Posterior vena cava (tissue), 2 donors: ENCODE measurements at regions of chr11 and their contacts with region 1.

Region 1: DNA sequence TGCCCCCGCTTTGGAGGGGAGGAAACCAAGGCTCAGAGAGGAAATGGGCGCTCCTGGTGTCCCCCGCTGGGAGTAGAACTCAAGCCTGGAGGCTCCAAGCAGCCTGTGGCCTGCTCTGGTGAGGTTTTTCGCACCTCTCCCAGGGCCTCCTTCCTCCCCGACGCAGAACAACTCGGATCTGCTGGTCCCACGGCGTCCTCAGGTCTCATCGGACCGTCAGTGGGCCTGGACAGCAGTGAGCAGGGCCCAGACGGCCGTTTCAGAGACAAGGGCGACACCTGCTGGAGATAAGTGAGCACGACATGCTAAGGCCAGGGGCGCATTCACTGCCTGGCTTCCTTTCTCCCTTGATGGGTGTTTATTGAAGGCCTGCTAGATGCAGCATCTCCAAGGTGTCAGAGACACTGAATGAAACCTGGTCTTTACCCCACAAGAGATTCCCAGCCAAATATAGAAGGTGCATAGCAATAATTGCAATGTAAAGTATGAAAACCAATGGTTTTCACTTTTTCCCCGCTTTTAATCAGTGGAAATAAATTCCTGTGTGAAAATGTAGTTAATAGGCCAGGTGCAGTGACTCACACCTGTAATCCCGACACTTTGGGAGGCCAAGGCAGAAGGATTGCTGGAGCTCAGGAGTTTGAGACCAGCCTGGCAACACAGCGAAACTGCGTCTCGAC is 26.9 kb upstream of the CD82 start:
- DNase-seq: peak; percentile 93

Region 2: DNA sequence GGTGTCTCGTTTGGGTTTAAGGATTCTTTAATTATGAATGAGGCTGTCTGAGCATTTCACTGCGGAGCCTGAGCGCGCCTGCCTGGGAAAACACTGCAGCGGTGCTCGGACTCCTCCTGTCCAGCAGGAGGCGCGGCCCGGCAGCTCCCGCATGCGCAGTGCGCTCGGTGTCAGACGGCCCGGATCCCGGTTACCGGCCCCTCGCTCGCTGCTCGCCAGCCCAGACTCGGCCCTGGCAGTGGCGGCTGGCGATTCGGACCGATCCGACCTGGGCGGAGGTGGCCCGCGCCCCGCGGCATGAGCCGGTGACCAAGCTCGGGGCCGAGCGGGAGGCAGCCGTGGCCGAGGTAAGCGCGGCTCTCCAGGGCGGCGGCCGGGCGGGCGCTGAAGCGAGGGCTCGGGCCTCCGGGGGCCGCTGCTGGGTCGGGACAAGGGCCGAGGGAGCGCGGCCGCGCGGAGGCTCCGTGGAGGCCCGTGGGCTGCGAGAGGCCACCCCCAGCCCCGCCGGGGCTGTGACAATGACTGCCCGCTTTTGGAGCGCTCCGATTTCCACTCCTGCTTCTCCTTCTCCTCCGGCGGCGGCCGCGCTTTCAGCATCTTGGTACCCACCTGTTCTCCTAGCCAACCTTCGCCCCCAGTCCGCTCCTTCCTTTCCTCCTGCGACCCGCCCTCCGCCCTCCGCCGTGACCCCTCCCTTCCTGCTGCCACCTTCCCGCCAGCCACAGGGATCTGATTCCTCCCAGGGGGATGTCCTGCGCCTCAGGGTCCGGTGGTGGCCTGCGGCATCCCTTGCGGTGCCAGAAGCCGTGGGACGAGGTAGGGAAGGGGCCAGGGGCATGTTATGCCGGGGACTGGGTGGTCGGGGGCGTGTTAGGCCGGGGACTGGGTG is 442.8 kb before region 1 on chr11 and contains the start of gene EXT2:
- intact Hi-C with region 1: loop called in 1 of 2 experiments (anchors 10 kb)
- DNase-seq: peak; percentile 96
- total RNA-seq, gene EXT2: 60.1 to 62.8 TPM

Region 3: DNA sequence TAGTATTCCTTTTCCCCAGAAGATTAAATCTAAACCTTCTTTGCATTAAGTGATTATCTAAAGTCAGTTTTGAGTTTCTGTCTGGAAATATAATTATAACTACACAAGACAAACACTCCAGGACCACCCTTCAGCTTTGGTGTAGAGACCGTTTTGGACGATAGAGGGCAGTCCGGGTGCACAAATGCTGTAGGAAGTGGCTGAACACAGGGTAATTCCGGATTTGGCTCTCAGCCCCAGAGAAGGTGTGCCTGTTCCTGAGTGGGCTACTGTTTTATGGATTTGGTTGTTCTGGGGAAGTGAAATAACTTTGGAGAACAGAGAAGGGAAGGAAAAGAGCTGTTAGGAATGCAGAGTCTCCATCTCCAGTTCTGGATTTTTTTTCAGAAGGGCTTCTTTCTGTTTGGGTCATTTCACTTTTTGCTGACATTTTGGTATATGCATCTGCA is 428.3 kb before region 1 on chr11:
- intact Hi-C with region 1: loop called in 1 of 2 experiments (anchors 10 kb)
- DNase-seq: no peak

Region 4: DNA sequence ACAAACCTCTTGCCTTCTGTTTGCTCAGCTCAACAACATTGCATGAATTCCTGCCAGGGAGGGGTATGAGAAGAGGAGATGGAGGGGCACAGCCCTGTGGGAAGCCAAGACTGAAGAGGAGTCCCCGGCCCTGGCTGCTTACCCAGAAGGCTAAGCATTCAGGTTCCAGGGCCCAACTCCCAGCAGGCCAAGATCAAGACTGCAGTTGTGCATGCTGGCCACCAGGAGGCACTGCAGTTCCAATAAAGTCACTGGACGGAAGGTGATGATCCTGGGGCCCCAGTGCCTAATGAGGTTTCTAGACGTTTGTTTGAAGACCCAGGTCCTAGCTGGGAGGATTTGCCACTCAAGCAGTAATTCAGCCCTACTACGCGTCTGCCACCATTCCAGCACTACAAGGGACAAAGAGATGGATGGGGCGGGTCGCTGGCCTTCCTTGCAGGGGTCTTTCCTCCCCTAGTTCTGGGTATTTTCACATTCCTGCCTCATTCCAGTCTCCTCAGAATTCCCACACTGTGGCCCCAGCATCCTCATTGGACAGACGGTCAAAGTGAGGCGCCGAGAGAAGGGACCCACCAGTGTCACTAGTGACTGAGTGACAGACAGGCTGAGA is 252.1 kb before region 1 on chr11:
- intact Hi-C with region 1: loop called (anchors 2 to 5 kb)
- DNase-seq: no peak

Region 5: GRCh38 chr11:44645827-44646226 is 107.3 kb after region 1 on chr11:
- intact Hi-C with region 1: no loop called
- DNase-seq: no peak